HepG2 (cell line): ENCODE measurements at regions of chr19 and their contacts with region 1.

Region 1: GRCh38 chr19:36054119-36054732 is at the start of gene THAP8:
- DNase-seq: peak; percentile 97
- ATAC-seq: peak; percentile 82
- H3K4me3 ChIP-seq: peak within 1 kb of the TSS; percentile 74 to 76 (median 75)
- H3K27ac ChIP-seq: peak within 1 kb of the TSS; percentile 83
- H3K4me1 ChIP-seq: peaks cover 69% of the 10 kb centered on the region
- H3K27me3 ChIP-seq: no peaks in the 10 kb centered on the region; a peak in 1 of 5 replicates
- CTCF ChIP-seq: peak; percentile 59
- EP300 ChIP-seq: 0 out of 4 replicates have a peak, but pooled peaks of 1 of the 2 experiments have one; percentile 15
- POLR2A ChIP-seq: peak; percentile 69 to 94
- RAD21 ChIP-seq: peak; percentile 46
- total RNA-seq, gene THAP8: 1.4 and 1.7 TPM in 2 replicates

Region 2: GRCh38 chr19:36009220-36009619 is 45.0 kb before region 1 on chr19:
- CTCF ChIA-PET with region 1: no interaction called
- POLR2A ChIA-PET with region 1: interaction called, 17 read pairs
- in situ Hi-C with region 1: no loop called
- intact Hi-C with region 1: no loop called
- DNase-seq: no peak
- ATAC-seq: no peak
- H3K4me3 ChIP-seq: peak overlapping the region in 1 of 3 experiments; percentile 93; a peak in 2 of 6 replicates
- H3K27ac ChIP-seq: peak overlapping the region; percentile 35
- H3K4me1 ChIP-seq: peaks cover 46% of the 10 kb centered on the region
- H3K27me3 ChIP-seq: no peaks in the 10 kb centered on the region; a peak in 1 of 5 replicates
- CTCF ChIP-seq: no peak
- EP300 ChIP-seq: no peak
- POLR2A ChIP-seq: no peak
- RAD21 ChIP-seq: no peak

Region 3: DNA sequence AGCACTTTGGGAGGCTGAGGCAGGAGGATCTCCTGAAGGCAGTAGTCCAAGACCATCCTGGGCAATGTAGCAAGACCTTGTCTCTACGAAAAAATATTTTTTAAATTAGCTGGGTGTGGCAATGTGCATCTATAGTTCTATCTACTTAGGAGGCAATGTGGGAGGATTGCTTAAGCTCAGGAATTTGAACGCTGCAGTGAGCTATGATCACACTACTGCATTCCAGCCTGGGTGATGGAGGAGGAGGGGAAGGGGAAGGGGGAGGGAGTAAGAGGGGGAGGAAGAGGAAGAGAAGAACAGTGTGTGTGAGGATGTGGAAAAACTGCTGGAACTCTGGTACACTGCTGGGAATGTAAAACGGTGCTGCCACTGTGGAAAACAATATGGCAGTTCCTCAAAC is 12.4 kb before region 1 on chr19:
- CTCF ChIA-PET with region 1: no interaction called
- POLR2A ChIA-PET with region 1: interaction called, 18 read pairs
- in situ Hi-C with region 1: no loop called
- intact Hi-C with region 1: no loop called
- DNase-seq: peak; percentile 87
- ATAC-seq: peak; percentile 94
- H3K4me3 ChIP-seq: no peak overlapping the region
- H3K27ac ChIP-seq: peak overlapping the region; percentile 36
- H3K4me1 ChIP-seq: peaks cover 24% of the 10 kb centered on the region
- H3K27me3 ChIP-seq: no peaks in the 10 kb centered on the region
- CTCF ChIP-seq: no peak
- EP300 ChIP-seq: peak in 1 of 2 experiments; percentile 34; a peak in 1 of 4 replicates
- POLR2A ChIP-seq: no peak
- RAD21 ChIP-seq: no peak

Region 4: GRCh38 chr19:36132489-36132891 is 78.3 kb after region 1 on chr19:
- CTCF ChIA-PET with region 1: no interaction called
- POLR2A ChIA-PET with region 1: interaction called, 13 read pairs
- in situ Hi-C with region 1: no loop called
- intact Hi-C with region 1: no loop called
- DNase-seq: no peak
- ATAC-seq: no peak
- H3K4me3 ChIP-seq: no peak overlapping the region
- H3K27ac ChIP-seq: no peak overlapping the region
- H3K4me1 ChIP-seq: peaks cover 56% of the 10 kb centered on the region
- H3K27me3 ChIP-seq: no peaks in the 10 kb centered on the region
- CTCF ChIP-seq: no peak
- EP300 ChIP-seq: no peak
- POLR2A ChIP-seq: no peak
- RAD21 ChIP-seq: no peak